WTC11 (cell line): ENCODE measurements at regions of chr2 and their contacts with region 1.

Region 1: GRCh38 chr2:219253753-219254590 is at the start of gene TUBA4A:
- DNase-seq: peak; percentile 85
- ATAC-seq: peak; percentile 81
- H3K4me3 Mint-ChIP-seq: peak within 1 kb of the TSS; percentile 79
- H3K27ac Mint-ChIP-seq: peak within 1 kb of the TSS; percentile 41; the same call in 1 of the 2 replicates
- H3K4me1 Mint-ChIP-seq: peaks cover 25% of the 10 kb centered on the region
- H3K27me3 Mint-ChIP-seq: peaks cover 69% of the 10 kb centered on the region
- CTCF ChIP-seq: no peak
- total RNA-seq, gene TUBA4A: 40.8 to 58.7 TPM (median 52.3 TPM) in 3 replicates

Region 2: DNA sequence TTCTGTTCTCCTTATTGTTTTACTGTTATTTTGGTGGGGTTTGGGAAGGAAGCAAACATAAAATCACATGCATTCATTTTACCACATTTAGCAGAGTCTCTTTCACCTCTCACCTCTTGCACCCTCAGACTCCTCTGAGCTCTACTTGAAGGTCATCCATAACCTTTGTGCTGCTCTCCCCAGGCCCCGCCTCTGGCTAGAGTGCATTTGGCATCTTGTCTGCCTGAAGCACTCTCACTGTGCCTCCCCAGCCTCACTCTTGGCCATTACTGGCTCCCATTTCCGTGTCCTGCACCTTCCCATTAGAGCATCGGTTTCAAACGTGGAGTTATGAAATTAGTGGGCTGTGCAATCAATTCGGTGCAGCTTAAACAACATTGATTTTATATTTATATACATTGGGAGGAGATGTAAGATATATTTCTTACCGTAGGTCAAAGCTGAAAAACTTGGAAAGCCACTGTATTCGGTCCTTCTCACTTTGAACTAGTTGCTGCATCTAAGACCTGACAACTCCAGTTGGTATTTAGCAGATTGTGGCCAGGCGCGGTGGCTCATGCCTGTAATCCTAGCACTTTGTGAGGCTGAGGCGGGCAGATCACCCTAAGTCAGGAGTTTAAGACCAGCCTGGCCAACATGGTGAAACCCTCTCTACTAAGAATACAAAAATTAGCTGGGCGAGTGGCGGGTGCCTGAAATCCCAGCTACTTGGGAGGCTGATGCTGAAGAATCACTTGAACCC is 54.3 kb before region 1 on chr2:
- CTCF ChIA-PET with region 1: no interaction called
- POLR2A ChIA-PET with region 1: no interaction called
- DNase-seq: no peak
- ATAC-seq: no peak
- H3K4me3 Mint-ChIP-seq: no peak overlapping the region
- H3K27ac Mint-ChIP-seq: no peak overlapping the region
- H3K4me1 Mint-ChIP-seq: peaks cover 8% of the 10 kb centered on the region
- H3K27me3 Mint-ChIP-seq: peaks cover 11% of the 10 kb centered on the region
- CTCF ChIP-seq: no peak

Region 3: GRCh38 chr2:219285894-219286425 is 32.0 kb after region 1 on chr2:
- CTCF ChIA-PET with region 1: interaction called, 10 read pairs
- POLR2A ChIA-PET with region 1: interaction called, 3 read pairs
- DNase-seq: peak; percentile 78
- ATAC-seq: peak; percentile 97
- H3K4me3 Mint-ChIP-seq: peak overlapping the region; percentile 32
- H3K27ac Mint-ChIP-seq: peak overlapping the region; percentile 26; the same call in 1 of the 2 replicates
- H3K4me1 Mint-ChIP-seq: peaks cover 11% of the 10 kb centered on the region
- H3K27me3 Mint-ChIP-seq: no peaks in the 10 kb centered on the region; the same call in 1 of the 2 replicates
- CTCF ChIP-seq: no peak